K562 (cell line): ENCODE measurements at regions of chr3 and their contacts with region 1.

Region 1: DNA sequence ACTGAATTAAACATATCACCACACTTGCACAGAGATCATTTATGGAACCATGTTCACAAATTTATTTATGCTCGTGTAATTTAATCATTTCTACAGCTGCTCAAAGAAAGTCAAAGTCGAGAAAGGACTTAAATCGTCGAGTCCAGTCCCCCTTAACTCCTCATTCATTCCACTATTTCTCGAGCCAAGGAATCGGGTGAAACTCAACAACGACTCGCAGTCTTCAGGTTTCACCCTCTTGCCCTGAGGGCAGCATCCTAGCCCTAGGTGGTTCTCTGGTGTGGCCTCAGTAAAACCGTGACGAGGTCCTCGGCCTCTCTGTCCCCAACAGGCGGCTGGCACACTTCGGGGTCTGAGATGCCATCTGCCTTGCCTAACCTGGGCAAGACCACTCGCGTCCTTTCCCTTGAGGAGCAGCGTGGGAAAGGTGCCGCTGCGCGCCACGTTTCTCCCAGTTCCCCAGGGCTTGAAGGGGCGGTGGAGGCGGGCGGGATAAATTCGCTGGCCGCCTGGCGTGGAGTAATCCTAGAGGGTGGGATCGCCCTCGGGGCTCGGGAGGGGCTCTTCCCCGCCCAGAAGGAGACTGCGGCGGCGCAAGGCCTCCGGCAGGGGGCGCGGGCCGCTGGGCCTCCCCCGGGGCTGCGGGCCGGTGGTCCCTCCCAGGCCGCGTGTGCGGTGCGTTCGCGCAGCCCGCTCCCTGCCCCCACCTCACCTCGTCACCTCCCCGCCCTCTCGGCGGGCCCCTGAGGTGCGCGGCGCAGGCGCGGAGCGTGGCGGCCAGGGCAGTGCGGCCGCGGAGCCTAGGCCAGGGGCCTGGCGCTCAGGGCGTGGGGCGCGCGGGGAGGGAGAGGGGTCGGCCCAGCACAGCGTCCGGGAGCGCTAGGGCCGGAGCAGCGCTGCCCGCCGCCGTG is at the start of gene ZNF639:
- DNase-seq: peak; percentile 93 to 98 (median 97)
- ATAC-seq: peak; percentile 87
- H3K4me3 ChIP-seq: peak within 1 kb of the TSS; percentile 94
- H3K27ac ChIP-seq: peak within 1 kb of the TSS; percentile 96
- H3K4me1 ChIP-seq: peaks cover 15 to 23% of the 10 kb centered on the region in 2 experiments; a peak in 4 of 5 replicates
- H3K27me3 ChIP-seq: no peaks in the 10 kb centered on the region
- CTCF ChIP-seq: peak; percentile 69 to 86 (median 74)
- EP300 ChIP-seq: no peak
- POLR2A ChIP-seq: peak; percentile 37
- RAD21 ChIP-seq: peak; percentile 48 to 63
- polyA plus RNA-seq, gene ZNF639: 17.6 to 21.5 TPM

Region 2: GRCh38 chr3:178436773-178437172 is 885.8 kb before region 1 on chr3:
- CTCF ChIA-PET with region 1: no interaction called
- POLR2A ChIA-PET with region 1: no interaction called
- in situ Hi-C with region 1: no loop called
- intact Hi-C with region 1: loop called (anchors 5 kb)
- DNase-seq: peak; percentile 14 to 25 (median 23)
- ATAC-seq: peak; percentile 68
- H3K4me3 ChIP-seq: no peak overlapping the region
- H3K27ac ChIP-seq: no peak overlapping the region
- H3K4me1 ChIP-seq: no peaks in the 10 kb centered on the region; a peak in 1 of 5 replicates
- H3K27me3 ChIP-seq: no peaks in the 10 kb centered on the region
- CTCF ChIP-seq: peak; percentile 41 to 68 (median 45); a peak in 4 of 6 replicates
- EP300 ChIP-seq: no peak
- POLR2A ChIP-seq: no peak
- RAD21 ChIP-seq: peak; percentile 65 to 70

Region 3: DNA sequence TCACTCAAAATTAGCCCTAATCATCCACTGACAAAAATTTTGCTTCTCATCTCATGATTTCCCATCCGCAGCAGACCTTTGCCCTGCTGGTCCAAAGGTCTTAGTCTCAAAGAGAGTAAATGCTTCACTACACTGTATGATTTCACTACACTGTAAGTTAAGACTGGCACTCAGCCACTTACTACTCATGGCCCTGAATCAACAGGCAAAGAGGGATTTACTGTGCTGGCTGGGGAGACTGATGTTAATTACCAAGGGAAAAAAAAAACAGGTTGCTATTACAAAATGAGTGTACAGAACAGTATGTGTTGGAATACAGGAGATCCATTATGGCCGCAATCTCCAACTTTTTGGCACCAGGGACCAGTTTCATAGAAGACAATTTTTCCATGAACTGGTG is 465.7 kb before region 1 on chr3:
- CTCF ChIA-PET with region 1: no interaction called
- POLR2A ChIA-PET with region 1: no interaction called
- in situ Hi-C with region 1: no loop called
- intact Hi-C with region 1: loop called (anchors 10 kb)
- DNase-seq: no peak
- ATAC-seq: no peak
- H3K4me3 ChIP-seq: no peak overlapping the region
- H3K27ac ChIP-seq: no peak overlapping the region
- H3K4me1 ChIP-seq: peaks cover 0 to 4% of the 10 kb centered on the region in 2 experiments; a peak in 2 of 5 replicates
- H3K27me3 ChIP-seq: no peaks in the 10 kb centered on the region
- CTCF ChIP-seq: no peak
- EP300 ChIP-seq: no peak
- POLR2A ChIP-seq: no peak
- RAD21 ChIP-seq: no peak

Region 4: DNA sequence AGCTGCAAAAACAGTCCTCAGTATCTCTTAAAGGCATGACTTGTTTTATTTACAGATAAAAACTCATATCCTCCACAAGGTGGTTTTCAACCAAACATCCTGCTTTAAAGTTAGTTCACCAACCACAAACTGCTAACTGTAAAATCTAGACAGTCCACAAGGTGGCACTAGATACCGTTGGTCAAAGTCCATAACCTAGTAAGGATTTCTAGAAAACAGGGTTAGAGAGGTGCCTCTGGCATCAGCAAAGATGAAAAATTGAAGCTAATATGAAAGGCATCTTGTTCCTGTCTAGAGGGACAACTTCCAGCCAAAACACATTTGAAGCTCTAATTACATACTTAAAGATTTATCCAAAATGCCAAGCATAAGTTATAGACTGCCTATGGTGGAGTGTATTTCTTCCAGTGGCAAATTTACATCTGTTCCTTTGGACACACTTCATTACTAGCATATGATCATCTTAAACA is 307.0 kb before region 1 on chr3:
- CTCF ChIA-PET with region 1: interaction called, 18 read pairs
- POLR2A ChIA-PET with region 1: interaction called, 4 read pairs
- in situ Hi-C with region 1: loop called (anchors 5 kb)
- intact Hi-C with region 1: no loop called
- DNase-seq: peak; percentile 56 to 87 (median 64)
- ATAC-seq: peak; percentile 92
- H3K4me3 ChIP-seq: no peak overlapping the region
- H3K27ac ChIP-seq: no peak overlapping the region
- H3K4me1 ChIP-seq: peaks cover 0 to 6% of the 10 kb centered on the region in 2 experiments; a peak in 2 of 5 replicates
- H3K27me3 ChIP-seq: no peaks in the 10 kb centered on the region
- CTCF ChIP-seq: peak; percentile 80 to 91 (median 85)
- EP300 ChIP-seq: no peak
- POLR2A ChIP-seq: no peak
- RAD21 ChIP-seq: peak; percentile 96 to 97

Region 5: GRCh38 chr3:179244878-179245277 is 77.7 kb before region 1 on chr3:
- CTCF ChIA-PET with region 1: no interaction called
- POLR2A ChIA-PET with region 1: no interaction called
- in situ Hi-C with region 1: no loop called
- intact Hi-C with region 1: no loop called
- DNase-seq: no peak
- ATAC-seq: no peak
- H3K4me3 ChIP-seq: no peak overlapping the region
- H3K27ac ChIP-seq: no peak overlapping the region
- H3K4me1 ChIP-seq: no peaks in the 10 kb centered on the region
- H3K27me3 ChIP-seq: no peaks in the 10 kb centered on the region
- CTCF ChIP-seq: no peak
- EP300 ChIP-seq: no peak
- POLR2A ChIP-seq: no peak
- RAD21 ChIP-seq: no peak

Region 6: DNA sequence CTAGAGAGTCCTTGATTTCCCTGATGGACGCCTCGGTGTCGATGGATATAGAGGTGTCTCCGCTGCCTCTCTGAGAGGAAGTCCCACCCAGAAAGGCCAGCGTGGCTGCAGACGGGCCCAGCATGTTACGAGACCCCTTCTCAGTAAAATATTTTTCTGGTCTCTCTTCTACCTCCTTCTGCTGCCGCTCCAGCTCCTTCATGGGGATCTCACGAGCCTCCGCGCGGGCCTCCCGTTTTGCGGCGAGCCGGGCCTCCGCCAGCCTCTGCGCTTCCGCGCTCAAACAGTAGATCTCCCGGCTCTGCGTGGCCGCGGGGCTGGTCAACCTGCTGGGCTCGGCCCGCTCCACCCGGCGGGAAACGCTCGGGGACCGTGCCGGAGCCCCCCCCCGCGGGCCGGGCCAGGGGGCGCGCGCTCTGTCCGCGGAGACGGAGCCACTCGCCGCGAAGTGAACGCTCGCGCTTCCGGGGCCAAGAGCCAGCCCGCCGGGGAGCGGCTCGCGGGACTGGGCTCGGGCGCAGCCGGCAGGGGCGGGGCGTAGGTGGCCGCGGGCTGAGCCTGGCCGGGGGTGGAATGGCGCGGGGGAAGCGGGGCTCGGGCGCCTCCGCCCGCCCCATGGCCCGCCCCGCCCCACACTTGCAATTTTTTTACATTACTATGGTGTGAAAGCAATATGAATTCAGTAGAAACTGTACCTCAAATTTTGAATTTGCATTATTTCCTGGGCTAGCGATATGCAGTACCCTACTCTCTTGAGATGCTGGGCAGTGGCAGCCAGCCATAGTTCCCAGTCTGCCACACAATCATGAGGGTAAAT is 61.4 kb before region 1 on chr3:
- CTCF ChIA-PET with region 1: no interaction called
- POLR2A ChIA-PET with region 1: no interaction called
- in situ Hi-C with region 1: no loop called
- intact Hi-C with region 1: loop called (anchors 2 kb)
- DNase-seq: peak; percentile 90 to 93 (median 92)
- ATAC-seq: peak; percentile 87
- H3K4me3 ChIP-seq: peak overlapping the region; percentile 63
- H3K27ac ChIP-seq: peak overlapping the region; percentile 89
- H3K4me1 ChIP-seq: peaks cover 24 to 25% of the 10 kb centered on the region in 2 experiments; a peak in 4 of 5 replicates
- H3K27me3 ChIP-seq: no peaks in the 10 kb centered on the region
- CTCF ChIP-seq: no peak
- EP300 ChIP-seq: no peak
- POLR2A ChIP-seq: peak; percentile 69; the same call in 1 of the 2 replicates
- RAD21 ChIP-seq: 0 out of 4 replicates have a peak, but pooled peaks of 1 of the 2 experiments have one; percentile 1

Region 7: DNA sequence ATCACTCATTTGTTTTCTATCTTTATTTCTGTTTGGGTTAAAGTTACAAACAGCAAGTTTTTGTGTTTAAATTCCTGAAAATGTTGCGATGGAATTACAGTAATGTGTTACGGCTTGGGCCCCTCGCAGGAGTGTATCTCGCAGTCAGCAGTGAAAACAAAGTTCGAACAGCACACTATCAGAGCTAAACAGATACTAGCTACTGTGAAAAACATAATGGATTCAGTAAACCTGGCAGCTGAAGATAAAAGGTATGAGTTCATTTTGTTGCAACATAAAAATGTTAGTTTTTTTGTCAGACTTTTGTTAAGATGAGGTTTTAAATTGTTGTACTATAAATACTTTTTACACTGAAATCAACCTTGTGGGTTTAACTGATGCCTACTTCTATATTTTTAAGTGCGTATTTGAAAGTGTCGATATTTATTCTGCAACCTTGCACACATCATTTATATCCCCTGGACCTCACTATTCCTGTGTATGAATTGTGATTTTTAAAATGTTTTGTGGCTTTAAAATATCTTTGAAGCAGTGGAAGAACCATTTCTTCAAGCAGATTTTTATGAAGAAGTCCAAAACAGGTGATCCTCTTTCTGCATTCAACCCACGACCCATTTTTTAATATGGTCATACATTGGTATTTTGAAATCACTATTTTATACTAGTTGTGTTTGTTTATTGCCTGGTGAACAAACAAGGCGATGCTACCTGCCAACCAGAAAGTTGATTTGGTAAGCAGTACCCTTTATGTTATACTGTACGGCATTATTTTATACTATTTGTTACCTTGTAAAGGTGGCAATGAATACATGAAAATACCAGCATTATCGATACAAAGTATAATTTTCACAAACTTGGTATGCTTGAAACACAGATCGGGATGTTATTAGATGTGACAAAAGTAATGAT is 52.8 kb after region 1 on chr3:
- CTCF ChIA-PET with region 1: no interaction called
- POLR2A ChIA-PET with region 1: no interaction called
- in situ Hi-C with region 1: no loop called
- intact Hi-C with region 1: loop called (anchors 1 kb)
- DNase-seq: peak; percentile 61 to 86 (median 70)
- ATAC-seq: peak; percentile 91
- H3K4me3 ChIP-seq: no peak overlapping the region
- H3K27ac ChIP-seq: peak overlapping the region; percentile 73
- H3K4me1 ChIP-seq: peaks cover 4 to 17% of the 10 kb centered on the region in 2 experiments; a peak in 4 of 5 replicates
- H3K27me3 ChIP-seq: no peaks in the 10 kb centered on the region
- CTCF ChIP-seq: no peak
- EP300 ChIP-seq: peak; percentile 97
- POLR2A ChIP-seq: no peak
- RAD21 ChIP-seq: no peak

Region 8: GRCh38 chr3:180026997-180027396 is 704.5 kb after region 1 on chr3:
- CTCF ChIA-PET with region 1: no interaction called
- POLR2A ChIA-PET with region 1: no interaction called
- in situ Hi-C with region 1: no loop called
- intact Hi-C with region 1: no loop called
- DNase-seq: no peak
- ATAC-seq: no peak
- H3K4me3 ChIP-seq: no peak overlapping the region
- H3K27ac ChIP-seq: no peak overlapping the region
- H3K4me1 ChIP-seq: no peaks in the 10 kb centered on the region
- H3K27me3 ChIP-seq: no peaks in the 10 kb centered on the region
- CTCF ChIP-seq: no peak
- EP300 ChIP-seq: no peak
- POLR2A ChIP-seq: no peak
- RAD21 ChIP-seq: no peak